GM10248 (cell line): ENCODE measurements at regions of chr3 and their contacts with region 1.

Region 1: GRCh38 chr3:128056258-128056657 is 4.0 kb downstream of the SEC61A1 start:
- DNase-seq: no peak
- CTCF ChIP-seq: no peak

Region 2: DNA sequence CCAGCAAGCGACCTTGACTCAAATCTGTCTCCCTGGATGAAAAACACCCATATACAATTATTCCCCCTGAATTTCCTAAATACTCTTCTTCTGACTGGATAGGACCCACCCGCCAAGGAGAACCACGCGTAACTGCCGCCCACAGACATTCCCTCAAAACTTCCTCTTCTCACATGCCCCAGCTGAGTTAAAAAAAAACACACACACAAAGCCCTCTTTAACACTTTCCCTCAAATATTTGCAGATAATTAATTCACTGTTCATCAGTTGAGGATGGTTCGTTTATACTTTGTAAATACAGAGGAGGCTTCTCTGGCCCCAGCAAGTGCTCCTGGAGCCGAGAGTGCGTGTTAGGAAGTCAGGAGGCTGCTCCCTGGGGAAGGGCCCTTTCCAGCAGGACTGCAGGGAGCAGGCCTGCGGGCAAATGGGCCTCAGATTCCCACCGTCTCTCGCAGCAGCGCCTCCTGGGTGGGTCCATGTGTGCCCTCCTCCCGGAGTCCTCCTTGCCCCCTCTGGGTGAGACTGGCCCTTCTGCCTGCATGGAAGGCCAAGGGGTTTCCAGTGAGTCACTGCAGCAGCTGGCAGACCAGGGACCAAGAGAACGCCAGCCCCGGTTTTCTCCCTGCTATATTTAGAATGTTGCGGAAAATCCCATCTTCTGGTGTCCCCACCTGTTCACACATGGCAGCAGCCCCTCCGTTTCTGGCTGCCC is 280.7 kb before region 1 on chr3:
- CTCF ChIA-PET with region 1: no interaction called
- POLR2A ChIA-PET with region 1: no interaction called
- DNase-seq: peak; percentile 51
- CTCF ChIP-seq: no peak

Region 3: GRCh38 chr3:127786353-127787070 is 269.7 kb before region 1 on chr3:
- CTCF ChIA-PET with region 1: no interaction called
- POLR2A ChIA-PET with region 1: no interaction called
- DNase-seq: no peak
- CTCF ChIP-seq: no peak

Region 4: DNA sequence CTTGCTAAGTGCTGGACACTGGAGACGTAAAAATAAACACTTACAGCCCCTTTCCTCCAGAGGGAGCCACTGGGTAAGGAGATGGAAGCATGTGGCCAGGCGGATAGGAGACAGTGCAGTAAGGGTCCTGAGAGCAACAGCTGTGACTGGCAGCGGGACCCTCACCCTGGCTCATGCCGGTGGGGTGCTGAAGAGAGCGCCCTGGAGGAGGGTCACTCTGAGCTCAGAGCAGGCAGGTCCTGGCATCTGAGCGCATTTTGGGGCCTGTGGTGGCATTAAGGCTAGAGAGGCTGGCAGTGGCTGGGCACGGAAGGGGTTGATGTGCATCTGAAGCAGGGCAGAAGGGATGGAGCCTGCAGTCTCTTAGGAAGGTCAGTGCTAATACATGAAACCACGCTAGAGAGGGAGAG is 12.0 kb after region 1 on chr3:
- CTCF ChIA-PET with region 1: interaction called, 26 read pairs
- POLR2A ChIA-PET with region 1: interaction called, 5 read pairs
- DNase-seq: peak; percentile 51
- CTCF ChIP-seq: peak; percentile 36